ENCODE measurements at regions of chr3 and their contacts with region 1.

Region 1: DNA sequence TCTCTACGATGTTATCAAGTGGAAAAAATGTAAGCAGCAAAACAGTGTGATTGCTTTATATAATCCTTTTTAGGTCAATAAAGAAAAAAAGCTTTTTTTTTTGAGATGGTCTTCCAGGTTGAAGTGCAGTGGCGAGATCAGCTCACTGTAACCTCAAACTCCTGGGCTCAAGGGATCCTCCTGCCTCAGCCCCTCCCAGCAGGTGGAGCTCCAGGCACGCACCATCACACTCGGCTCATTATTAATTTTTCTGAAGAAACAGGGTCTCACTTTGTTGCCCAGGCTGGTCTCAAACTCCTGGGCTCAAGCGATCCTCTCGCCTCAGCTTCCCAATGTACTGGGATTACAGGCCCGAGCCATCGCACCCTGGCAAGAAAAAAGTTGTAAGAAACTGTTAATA is 17.3 kb downstream of the RNF168 start:
- DNase-seq: peak; percentile 29
- H3K4me3 Mint-ChIP-seq: no peak overlapping the region
- H3K27ac Mint-ChIP-seq: no peak overlapping the region
- H3K4me1 Mint-ChIP-seq: no peaks in the 10 kb centered on the region
- H3K27me3 Mint-ChIP-seq: no peaks in the 10 kb centered on the region
- CTCF ChIP-seq: peak; percentile 32

Region 2: GRCh38 chr3:196317687-196318467 is 168.4 kb before region 1 on chr3 and contains the start of gene DYNLT2B:
- CTCF ChIA-PET with region 1: no interaction called
- POLR2A ChIA-PET with region 1: no interaction called
- intact Hi-C with region 1: no loop called
- DNase-seq: peak; percentile 87
- H3K4me3 Mint-ChIP-seq: peak within 1 kb of the TSS; percentile 94
- H3K27ac Mint-ChIP-seq: peak within 1 kb of the TSS; percentile 95
- H3K4me1 Mint-ChIP-seq: no peaks in the 10 kb centered on the region
- H3K27me3 Mint-ChIP-seq: no peaks in the 10 kb centered on the region
- CTCF ChIP-seq: no peak
- total RNA-seq, gene DYNLT2B: 22.3 and 23.5 TPM in 2 replicates

Region 3: DNA sequence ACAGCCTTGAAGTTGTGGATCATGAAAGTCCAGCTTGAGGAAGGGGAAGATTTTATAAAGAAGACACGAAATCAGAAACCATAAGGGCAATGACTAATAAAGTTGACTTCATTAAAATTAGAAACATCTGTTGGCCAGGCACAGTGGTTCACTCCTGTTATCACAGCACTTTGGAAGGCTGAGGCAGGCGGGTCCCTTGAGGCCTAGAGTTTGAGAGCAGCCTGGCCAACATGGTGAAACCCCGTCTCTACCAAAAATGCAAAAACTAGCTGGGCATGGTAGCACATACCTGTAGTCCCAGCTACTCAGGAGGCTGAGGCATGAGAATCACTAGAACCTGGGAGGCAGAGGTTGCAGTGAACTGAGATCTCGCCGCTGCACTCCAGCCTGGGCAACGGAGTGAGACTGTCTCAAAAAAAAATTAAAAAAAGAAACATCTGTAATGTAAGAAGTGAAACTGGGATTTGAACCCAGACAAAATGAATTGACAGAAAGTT is 46.2 kb before region 1 on chr3:
- CTCF ChIA-PET with region 1: interaction called, 10 read pairs
- POLR2A ChIA-PET with region 1: no interaction called
- intact Hi-C with region 1: no loop called
- DNase-seq: no peak
- H3K4me3 Mint-ChIP-seq: no peak overlapping the region
- H3K27ac Mint-ChIP-seq: no peak overlapping the region
- H3K4me1 Mint-ChIP-seq: peaks cover 5% of the 10 kb centered on the region
- H3K27me3 Mint-ChIP-seq: no peaks in the 10 kb centered on the region
- CTCF ChIP-seq: no peak

Region 4: GRCh38 chr3:196563721-196564225 is 77.5 kb after region 1 on chr3:
- CTCF ChIA-PET with region 1: no interaction called
- POLR2A ChIA-PET with region 1: no interaction called
- intact Hi-C with region 1: no loop called
- DNase-seq: peak; percentile 86
- H3K4me3 Mint-ChIP-seq: peak overlapping the region; percentile 74
- H3K27ac Mint-ChIP-seq: peak overlapping the region; percentile 94
- H3K4me1 Mint-ChIP-seq: peaks cover 19% of the 10 kb centered on the region
- H3K27me3 Mint-ChIP-seq: no peaks in the 10 kb centered on the region
- CTCF ChIP-seq: no peak